ENCODE measurements at regions of chr2 and their contacts with region 1.

Region 1: GRCh38 chr2:119641562-119642258 is 37.3 kb upstream of the TMEM177 start:
- DNase-seq: peak; percentile 82
- ATAC-seq: peak; percentile 99
- H3K4me3 Mint-ChIP-seq: no peak overlapping the region
- H3K27ac Mint-ChIP-seq: no peak overlapping the region
- H3K4me1 Mint-ChIP-seq: peaks cover 2% of the 10 kb centered on the region
- H3K27me3 Mint-ChIP-seq: no peaks in the 10 kb centered on the region
- CTCF ChIP-seq: peak; percentile 84

Region 2: DNA sequence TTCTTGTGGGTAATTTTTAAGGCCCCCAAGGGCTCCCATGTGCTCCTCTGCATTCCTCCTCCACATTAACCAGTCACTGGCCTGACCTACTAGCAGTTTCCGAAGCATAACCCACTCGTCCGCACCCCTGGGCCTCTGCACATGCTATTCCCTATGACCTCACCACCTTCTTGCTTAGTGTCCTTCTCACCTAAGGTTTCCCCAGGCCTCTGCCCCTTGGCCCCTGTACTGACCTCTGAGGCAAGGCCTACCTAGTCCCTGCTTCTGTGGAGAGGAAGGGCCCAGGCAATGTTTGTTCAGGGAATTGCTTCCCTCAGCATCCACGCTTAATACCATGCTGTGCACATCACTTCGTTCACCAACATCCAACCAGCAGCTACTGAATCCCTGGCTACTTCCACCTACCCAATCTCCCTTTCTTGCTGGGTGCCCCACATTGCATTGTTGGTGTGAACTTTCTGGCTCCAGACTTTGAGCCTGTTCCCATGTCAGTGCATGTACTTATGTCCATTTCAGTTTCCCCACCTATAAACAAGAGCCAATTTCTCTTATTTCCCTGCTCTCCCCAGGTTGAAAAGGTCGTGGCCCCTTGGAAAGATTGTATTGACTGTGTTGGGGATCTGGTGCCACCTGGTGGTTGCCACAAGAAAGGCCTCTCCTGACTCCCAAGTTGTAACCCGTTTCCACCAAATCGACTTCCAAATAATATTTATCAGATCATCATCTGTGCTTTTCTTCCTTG is 18.1 kb after region 1 on chr2:
- CTCF ChIA-PET with region 1: interaction called, 85 read pairs
- POLR2A ChIA-PET with region 1: interaction called, 4 read pairs
- intact Hi-C with region 1: loop called (anchors 1 kb)
- DNase-seq: peak; percentile 57
- ATAC-seq: peak; percentile 53
- H3K4me3 Mint-ChIP-seq: no peak overlapping the region
- H3K27ac Mint-ChIP-seq: no peak overlapping the region
- H3K4me1 Mint-ChIP-seq: no peaks in the 10 kb centered on the region
- H3K27me3 Mint-ChIP-seq: peaks cover 4% of the 10 kb centered on the region
- CTCF ChIP-seq: peak; percentile 80

Region 3: GRCh38 chr2:119678998-119679710 is 37.4 kb after region 1 on chr2 and contains the start of gene TMEM177:
- CTCF ChIA-PET with region 1: interaction called, 11 read pairs
- POLR2A ChIA-PET with region 1: interaction called, 3 read pairs
- intact Hi-C with region 1: no loop called
- DNase-seq: peak; percentile 90
- ATAC-seq: peak; percentile 96
- H3K4me3 Mint-ChIP-seq: peak within 1 kb of the TSS; percentile 99
- H3K27ac Mint-ChIP-seq: peak within 1 kb of the TSS; percentile 95
- H3K4me1 Mint-ChIP-seq: peaks cover 39% of the 10 kb centered on the region
- H3K27me3 Mint-ChIP-seq: no peaks in the 10 kb centered on the region
- CTCF ChIP-seq: no peak
- total RNA-seq, gene TMEM177: 13.1 to 14.6 TPM

Measured in activated CD8-positive, alpha-beta T cell treated with anti-CD3 and anti-CD28 coated beads for 36 hours (primary cell).